ENCODE measurements at regions of chr1 and their contacts with region 1.

Region 1: DNA sequence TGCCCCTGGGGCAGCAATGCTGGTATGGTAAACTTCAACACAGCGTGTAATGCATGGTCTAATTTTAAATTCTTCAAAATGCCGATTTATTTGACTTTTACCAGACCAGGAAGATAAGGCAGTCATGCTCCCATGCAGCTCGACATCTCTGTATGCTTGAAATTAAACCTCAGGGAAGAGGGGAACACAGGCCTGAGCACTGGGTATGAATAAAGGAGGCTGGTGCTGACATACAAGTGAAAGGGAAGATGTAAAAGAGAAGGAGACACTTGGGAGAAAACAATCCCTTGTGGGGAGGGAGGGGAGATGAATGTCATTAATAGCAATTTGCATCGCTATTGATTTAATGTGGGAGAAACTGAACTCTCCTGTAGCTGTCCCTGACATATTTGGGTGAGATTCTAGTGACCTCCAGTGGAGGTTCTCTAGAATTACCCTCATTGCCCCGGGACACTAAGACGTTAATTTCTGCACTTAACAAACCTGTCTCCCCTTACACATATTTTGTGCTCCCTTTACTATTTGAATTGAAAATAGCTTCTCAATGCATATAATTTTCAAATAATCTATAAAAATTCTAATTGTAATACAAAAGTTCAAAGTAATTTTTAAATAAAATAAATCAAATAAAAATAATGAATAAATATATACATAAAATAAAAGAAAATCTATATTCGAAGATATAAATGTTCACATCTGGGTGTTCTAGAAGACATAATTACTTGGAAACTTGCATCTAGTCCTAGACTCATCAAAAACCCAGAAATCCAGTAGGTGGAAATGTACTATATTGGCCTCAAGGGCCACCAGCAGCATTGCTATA is 283.1 kb downstream of the LMX1A start:
- DNase-seq: peak; percentile 19
- H3K4me3 ChIP-seq: no peak overlapping the region
- H3K27ac ChIP-seq: no peak overlapping the region
- H3K4me1 ChIP-seq: no peaks in the 10 kb centered on the region
- H3K27me3 ChIP-seq: no peaks in the 10 kb centered on the region
- CTCF ChIP-seq: peak; percentile 38 to 76 (median 66)
- POLR2A ChIP-seq: no peak

Region 2: DNA sequence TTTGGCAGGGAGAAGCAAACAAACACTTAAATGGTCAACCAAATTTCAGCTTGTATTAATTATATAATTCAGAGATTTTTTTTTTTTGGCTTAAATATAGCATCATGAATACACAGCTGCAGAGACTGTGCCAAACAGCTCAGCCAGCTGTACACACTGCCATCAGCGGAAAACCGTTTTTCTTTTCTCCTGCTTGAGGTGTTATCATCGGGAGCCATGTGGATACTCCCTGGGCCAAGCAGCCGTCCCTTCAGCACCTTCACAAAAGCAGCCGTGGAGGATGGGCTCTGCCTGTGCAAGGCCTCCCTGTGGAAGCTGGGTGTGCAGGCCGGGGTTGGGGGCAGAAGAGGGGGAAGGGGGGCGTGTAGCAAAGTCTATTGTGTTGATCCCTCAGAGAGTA is 1666.6 kb before region 1 on chr1:
- intact Hi-C with region 1: loop called (anchors 5 kb)
- DNase-seq: no peak
- H3K4me3 ChIP-seq: no peak overlapping the region
- H3K27ac ChIP-seq: no peak overlapping the region
- H3K4me1 ChIP-seq: no peaks in the 10 kb centered on the region
- H3K27me3 ChIP-seq: no peaks in the 10 kb centered on the region
- CTCF ChIP-seq: no peak
- POLR2A ChIP-seq: no peak

Region 3: DNA sequence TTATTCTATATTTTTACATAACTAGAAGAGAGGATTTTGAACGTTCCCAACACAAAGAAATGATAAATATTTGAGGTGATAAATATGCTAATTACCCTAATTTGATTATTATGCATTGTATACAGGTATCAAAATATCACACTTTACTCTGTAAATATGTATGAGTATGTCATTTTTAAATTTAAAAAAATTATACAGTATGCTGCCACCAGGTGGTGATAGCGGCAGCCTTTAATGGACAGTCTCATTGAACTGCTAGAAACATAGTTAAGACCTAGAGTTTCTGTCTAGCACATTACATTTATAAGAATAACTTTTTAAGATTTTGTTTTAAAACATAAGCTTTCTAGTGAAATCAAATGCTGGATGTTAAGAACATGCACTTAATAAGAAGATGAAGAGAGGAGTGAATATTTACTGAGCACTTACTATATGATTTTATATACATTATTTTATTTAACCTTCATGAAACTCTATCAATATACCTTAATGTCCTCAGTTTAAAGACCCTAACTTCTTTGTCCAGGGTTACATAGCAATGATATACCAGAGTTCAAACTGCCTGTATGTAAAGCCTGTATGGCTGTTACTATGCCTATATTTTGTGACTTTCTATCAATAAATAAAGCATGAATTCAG is 1544.6 kb before region 1 on chr1:
- intact Hi-C with region 1: loop called (anchors 2 kb)
- DNase-seq: no peak
- H3K4me3 ChIP-seq: no peak overlapping the region
- H3K27ac ChIP-seq: no peak overlapping the region
- H3K4me1 ChIP-seq: no peaks in the 10 kb centered on the region
- H3K27me3 ChIP-seq: no peaks in the 10 kb centered on the region
- CTCF ChIP-seq: peak; percentile 43 to 67 (median 64)
- POLR2A ChIP-seq: no peak

Region 4: DNA sequence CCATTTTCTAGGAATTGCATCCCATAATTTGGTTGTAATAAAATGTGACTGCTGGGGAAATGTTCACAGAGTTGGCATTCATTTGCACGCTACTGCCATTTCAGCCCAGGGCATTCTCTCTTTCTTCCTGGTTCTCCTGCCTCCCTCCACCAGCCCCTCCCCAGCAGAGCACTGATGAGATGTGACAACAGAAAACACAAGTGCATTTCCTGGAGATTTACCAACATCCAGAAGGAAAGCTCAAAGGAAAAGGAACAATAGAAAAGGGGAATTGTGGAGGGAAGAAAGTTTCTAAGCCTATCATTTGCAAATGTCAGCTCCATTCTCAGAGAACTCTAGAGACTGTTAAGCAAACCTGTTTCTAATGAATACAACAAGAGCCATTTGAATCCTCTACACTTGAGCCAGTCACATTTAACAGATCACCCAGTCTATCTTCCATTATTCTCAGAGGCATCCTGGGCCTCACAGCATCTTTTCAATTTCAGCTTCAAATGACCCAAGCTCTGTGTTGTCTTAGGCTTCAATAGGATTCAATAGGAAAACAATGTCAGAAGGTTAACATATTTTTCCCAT is 910.0 kb before region 1 on chr1:
- intact Hi-C with region 1: loop called (anchors 10 kb)
- DNase-seq: no peak
- H3K4me3 ChIP-seq: no peak overlapping the region
- H3K27ac ChIP-seq: no peak overlapping the region
- H3K4me1 ChIP-seq: no peaks in the 10 kb centered on the region
- H3K27me3 ChIP-seq: no peaks in the 10 kb centered on the region
- CTCF ChIP-seq: no peak
- POLR2A ChIP-seq: no peak

Region 5: DNA sequence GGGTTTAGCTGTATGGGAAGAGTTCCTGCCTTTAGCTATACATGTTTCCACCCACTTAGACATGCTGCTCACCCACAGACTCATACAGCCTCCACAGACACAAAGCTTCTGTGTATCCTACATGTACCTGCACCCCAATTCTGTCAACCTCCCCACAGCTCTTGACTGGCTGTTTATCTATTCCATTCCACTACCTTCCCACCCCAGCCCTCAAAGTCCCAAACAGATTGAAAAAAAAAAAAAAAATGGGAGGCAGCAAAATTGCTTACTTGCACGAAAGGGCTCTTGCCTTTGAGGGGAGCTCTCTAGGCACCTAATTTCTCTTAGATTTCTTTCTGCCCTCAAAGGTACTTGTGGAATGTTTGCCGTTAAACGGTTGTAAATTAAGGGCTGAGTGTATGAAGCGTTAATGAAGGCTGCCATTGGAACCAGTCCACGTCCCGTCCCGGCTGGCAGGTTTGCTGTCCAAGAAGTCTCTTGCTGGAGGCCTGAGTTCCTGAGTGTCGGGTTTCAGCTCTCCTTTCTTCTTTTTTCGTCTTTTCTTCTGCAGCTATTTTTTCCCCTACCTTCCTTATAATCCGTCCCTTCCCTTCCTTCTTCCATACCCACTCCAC is 470.8 kb before region 1 on chr1:
- intact Hi-C with region 1: loop called (anchors 10 kb)
- DNase-seq: peak; percentile 81
- H3K4me3 ChIP-seq: peak overlapping the region in 1 of 2 donors; percentile 20
- H3K27ac ChIP-seq: peak overlapping the region; percentile 78 to 85
- H3K4me1 ChIP-seq: peaks cover 16% of the 10 kb centered on the region
- H3K27me3 ChIP-seq: no peaks in the 10 kb centered on the region
- CTCF ChIP-seq: peak in 1 of 4 experiments; percentile 14
- POLR2A ChIP-seq: no peak

Region 6: DNA sequence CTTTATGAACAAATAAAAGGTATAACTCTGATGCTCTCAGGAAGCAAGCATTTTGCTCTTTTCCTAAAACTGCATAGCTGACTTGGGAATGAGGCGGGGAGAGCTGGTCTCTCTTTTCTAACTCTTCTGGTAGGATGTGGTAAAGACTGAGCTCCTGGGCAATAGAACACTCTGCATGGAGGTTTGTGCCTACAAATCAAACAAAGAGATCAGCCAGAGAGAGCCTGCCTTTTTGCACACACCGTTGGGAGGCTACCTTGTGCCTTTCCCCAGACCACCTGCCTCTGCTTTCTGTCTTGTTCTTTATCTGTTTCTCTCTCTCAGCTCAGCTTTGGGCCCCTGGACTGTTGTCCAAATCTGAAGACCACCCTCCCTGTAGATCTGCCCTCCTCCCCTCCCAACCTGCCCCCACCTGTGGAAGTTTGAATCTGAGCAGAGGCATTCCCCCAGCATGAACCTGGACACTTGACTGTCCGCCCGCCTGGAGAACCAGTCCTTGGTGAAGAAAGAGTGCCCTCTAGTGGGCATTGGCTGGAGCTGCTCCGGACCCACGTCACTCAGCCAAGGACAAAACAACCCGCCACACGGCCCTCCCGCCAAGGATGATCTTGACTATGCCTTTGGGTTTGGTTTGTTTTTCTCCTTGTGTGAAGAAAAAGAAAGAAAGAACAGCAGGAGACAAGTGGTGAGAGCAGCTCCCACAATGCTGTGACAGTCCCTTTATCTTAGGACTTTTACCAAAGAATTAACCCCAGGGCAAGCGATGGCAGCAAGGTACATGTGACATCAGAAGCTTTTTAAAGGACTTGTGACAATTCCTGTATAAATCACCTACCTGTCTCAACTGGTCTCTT is 286.2 kb before region 1 on chr1:
- intact Hi-C with region 1: loop called (anchors 10 kb)
- DNase-seq: peak; percentile 89
- H3K4me3 ChIP-seq: no peak overlapping the region
- H3K27ac ChIP-seq: peak overlapping the region; percentile 48 to 51
- H3K4me1 ChIP-seq: peaks cover 18% of the 10 kb centered on the region
- H3K27me3 ChIP-seq: no peaks in the 10 kb centered on the region
- CTCF ChIP-seq: peak; percentile 87 to 95 (median 92)
- POLR2A ChIP-seq: no peak

Measured in prostate gland (tissue), 2 donors.